ENCODE measurements at regions of chr17 and their contacts with region 1.

Region 1: GRCh38 chr17:76365256-76365903 is 11.7 kb upstream of the PRPSAP1 start:
- DNase-seq: peak; percentile 59
- ATAC-seq: peak; percentile 80
- H3K4me3 ChIP-seq: no peak overlapping the region
- H3K27ac ChIP-seq: no peak overlapping the region
- H3K4me1 ChIP-seq: peaks cover 6% of the 10 kb centered on the region
- H3K27me3 ChIP-seq: no peaks in the 10 kb centered on the region
- CTCF ChIP-seq: peak; percentile 84

Region 2: GRCh38 chr17:76384222-76384986 is 19.0 kb after region 1 on chr17 and contains the start of gene SPHK1:
- CTCF ChIA-PET with region 1: interaction called, 17 read pairs
- POLR2A ChIA-PET with region 1: interaction called, 11 read pairs
- intact Hi-C with region 1: loop called (anchors 1 kb)
- DNase-seq: peak; percentile 89
- ATAC-seq: peak; percentile 68
- H3K4me3 ChIP-seq: peak within 1 kb of the TSS; percentile 73
- H3K27ac ChIP-seq: peak within 1 kb of the TSS; percentile 60
- H3K4me1 ChIP-seq: peaks cover 21% of the 10 kb centered on the region
- H3K27me3 ChIP-seq: no peaks in the 10 kb centered on the region
- CTCF ChIP-seq: no peak
- total RNA-seq, gene SPHK1: 54.2 and 59.7 TPM in 2 replicates

Region 3: GRCh38 chr17:76427501-76428231 is 62.3 kb after region 1 on chr17:
- CTCF ChIA-PET with region 1: no interaction called
- POLR2A ChIA-PET with region 1: no interaction called
- intact Hi-C with region 1: no loop called
- DNase-seq: no peak
- ATAC-seq: no peak
- H3K4me3 ChIP-seq: no peak overlapping the region
- H3K27ac ChIP-seq: no peak overlapping the region
- H3K4me1 ChIP-seq: no peaks in the 10 kb centered on the region
- H3K27me3 ChIP-seq: no peaks in the 10 kb centered on the region
- CTCF ChIP-seq: no peak

Region 4: GRCh38 chr17:76517638-76518038 is 152.3 kb after region 1 on chr17:
- CTCF ChIA-PET with region 1: interaction called, 11 read pairs
- POLR2A ChIA-PET with region 1: no interaction called
- intact Hi-C with region 1: no loop called
- DNase-seq: peak; percentile 17
- ATAC-seq: peak; percentile 69
- H3K4me3 ChIP-seq: no peak overlapping the region
- H3K27ac ChIP-seq: no peak overlapping the region
- H3K4me1 ChIP-seq: no peaks in the 10 kb centered on the region
- H3K27me3 ChIP-seq: no peaks in the 10 kb centered on the region
- CTCF ChIP-seq: peak; percentile 30; the same call in 1 of the 2 replicates

Measured in PC-3 (cell line).